Posterior cingulate gyrus (tissue), 11 donors: ENCODE measurements at regions of chr11 and their contacts with region 1.

Region 1: DNA sequence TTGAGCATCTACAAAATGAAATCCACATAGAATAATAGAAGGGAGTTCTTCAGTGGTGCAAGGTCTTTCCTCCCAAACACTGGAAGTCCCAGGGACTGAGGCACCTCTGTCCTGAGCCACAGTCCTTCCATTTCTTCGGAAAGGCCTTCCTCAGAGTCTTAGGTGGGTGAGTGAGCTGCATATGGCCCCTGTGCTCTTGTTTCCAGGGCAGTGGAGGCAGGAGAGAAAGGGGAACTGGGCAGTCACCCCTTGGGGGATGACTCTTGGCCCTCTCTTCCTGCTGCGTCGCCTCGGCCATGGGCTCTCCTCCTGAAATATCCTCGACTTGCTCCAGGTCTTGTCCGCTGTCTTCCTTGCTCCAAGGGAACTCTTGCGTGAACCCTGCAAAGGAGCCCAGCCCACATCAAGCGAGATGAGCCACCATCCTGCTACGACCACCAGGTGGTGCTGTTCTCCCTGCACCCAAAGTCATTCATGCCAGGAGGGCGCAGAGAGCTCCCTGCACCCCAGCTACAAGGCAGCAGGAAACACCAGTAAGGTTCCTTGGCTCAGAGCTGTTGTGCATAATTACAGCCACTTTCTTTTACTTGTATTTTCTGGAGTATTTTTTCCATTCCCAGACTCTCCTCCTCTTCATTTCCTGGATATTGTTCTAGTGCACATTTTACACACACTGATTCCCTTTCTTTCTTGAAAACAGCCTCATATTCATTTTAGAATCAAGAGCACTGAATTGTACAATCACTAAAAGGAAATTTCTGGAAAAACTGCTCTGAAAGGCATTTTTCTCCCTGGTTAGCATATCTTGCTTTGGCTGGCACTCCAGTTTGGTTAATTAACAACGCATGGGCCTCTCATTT is 397.8 kb downstream of the OPCML start:
- DNase-seq: peak in 9 of 10 donors; percentile 40 to 93 (median 67)

Region 2: DNA sequence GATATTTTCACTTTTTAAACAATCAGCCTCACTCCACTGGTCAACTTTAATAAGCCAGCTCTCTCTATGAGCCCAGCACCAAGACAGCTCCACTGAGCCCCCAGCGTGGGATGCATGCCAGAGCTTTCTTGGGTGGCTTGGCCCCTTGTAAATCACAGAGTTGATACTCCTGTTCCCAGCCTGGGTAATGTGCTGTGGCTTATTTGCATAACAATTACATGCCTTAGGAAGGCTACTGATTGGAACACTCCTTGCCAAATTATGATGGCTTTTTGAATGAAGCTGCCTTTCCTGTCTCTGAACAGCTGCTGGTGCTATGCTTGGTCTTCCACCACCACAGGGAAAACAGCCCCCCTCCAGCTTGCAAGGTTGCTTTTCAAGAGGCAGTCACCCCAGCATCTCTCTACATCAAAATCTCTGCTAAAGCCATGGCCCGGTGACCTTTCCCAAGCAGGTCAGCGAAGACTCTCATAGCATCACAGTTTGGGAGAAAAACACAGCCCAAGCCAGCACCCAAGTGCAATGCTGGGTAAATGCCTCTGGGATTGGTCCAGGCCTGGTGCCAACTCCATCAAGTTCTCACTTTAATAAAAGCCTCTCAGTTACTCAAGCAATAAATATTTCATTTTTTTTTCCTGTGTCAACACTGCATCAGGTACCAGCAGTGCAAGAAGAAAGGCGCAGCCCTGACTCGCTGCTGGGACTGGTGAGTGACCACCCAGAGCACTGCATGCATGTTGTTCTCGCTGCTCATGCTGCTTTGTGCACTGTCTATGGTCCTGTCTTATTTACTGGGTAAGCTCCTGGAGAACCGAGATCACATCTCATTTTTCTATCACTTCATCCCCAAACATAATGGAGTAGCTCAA is 151.5 kb before region 1 on chr11:
- intact Hi-C with region 1: no loop called
- DNase-seq: no peak

Region 3: DNA sequence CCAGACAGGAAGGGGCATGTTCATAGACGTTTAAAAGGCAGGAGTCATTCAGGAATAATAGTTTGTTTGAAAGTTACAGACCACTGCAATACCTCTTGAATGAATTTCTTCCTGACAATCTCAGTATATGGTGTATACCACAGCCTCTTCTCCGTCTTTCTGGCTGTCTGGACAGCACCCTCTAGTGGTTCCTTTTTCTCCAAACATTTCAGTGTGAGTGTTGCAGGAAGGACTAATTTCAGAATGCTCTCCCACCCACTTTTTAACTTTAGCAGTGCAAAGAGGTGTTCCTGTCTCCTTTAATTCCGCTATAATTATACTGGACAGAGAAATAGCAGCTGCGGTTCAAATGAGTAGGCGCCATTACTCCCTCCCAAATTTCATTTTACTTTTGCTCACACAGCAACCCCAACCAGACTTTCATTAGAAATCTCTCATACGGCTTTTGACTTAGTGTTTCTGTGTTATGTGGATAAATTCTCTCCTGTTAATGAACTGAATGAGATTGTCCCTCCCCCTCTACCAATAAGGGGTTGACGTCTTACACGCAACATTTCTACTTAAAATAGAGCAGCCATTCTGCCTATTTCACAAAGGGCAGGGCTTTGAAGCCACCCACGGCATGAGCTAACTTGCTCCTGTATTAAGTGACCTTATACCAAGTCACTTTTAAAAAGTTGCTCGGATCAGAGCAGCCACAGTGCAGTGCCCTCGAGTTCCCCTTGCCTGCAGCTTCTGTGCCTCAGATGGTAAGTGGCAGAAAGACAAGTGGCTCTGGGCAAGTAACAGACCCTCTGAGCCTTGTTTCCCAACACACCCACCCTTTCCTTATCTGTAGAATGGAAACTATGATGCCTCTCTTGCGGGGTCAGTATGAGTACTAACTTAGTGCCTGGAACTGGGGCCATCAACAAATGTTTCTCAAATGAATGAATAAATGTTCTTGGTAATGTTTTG is 29.2 kb after region 1 on chr11:
- intact Hi-C with region 1: loop called (anchors 1 kb)
- DNase-seq: no peak

Region 4: GRCh38 chr11:133834682-133835592 is 700.4 kb after region 1 on chr11:
- intact Hi-C with region 1: loop called (anchors 1 kb)
- DNase-seq: peak in 6 of 10 donors; percentile 40 to 91 (median 62)